H1 (cell line): ENCODE measurements at regions of chr11 and their contacts with region 1.

Region 1: GRCh38 chr11:70755410-70756161 is 357.3 kb downstream of the CTTN start:
- DNase-seq: peak; percentile 56 to 91
- H3K4me3 ChIP-seq: no peak overlapping the region
- H3K27ac ChIP-seq: no peak overlapping the region
- H3K4me1 ChIP-seq: peaks cover 0 to 2% (median 0%) of the 10 kb centered on the region in 4 experiments; a peak in 2 of 7 replicates
- H3K27me3 ChIP-seq: no peaks in the 10 kb centered on the region
- CTCF ChIP-seq: peak; percentile 95 to 99 (median 96)
- EP300 ChIP-seq: 0 out of 3 replicates have a peak, but pooled peaks of 1 of the 2 experiments have one; percentile 36
- POLR2A ChIP-seq: no peak
- RAD21 ChIP-seq: peak; percentile 95 to 96

Region 2: GRCh38 chr11:70517986-70518907 is 237.3 kb before region 1 on chr11:
- CTCF ChIA-PET with region 1: interaction called, 10 read pairs
- POLR2A ChIA-PET with region 1: no interaction called
- DNase-seq: no peak
- H3K4me3 ChIP-seq: no peak overlapping the region
- H3K27ac ChIP-seq: no peak overlapping the region
- H3K4me1 ChIP-seq: peaks cover 0 to 14% (median 8%) of the 10 kb centered on the region in 4 experiments; a peak in 6 of 7 replicates
- H3K27me3 ChIP-seq: no peaks in the 10 kb centered on the region; a peak in 1 of 7 replicates
- CTCF ChIP-seq: peak in 2 of 3 experiments; percentile 11 to 14; a peak in 2 of 4 replicates
- EP300 ChIP-seq: no peak
- POLR2A ChIP-seq: no peak
- RAD21 ChIP-seq: peak in 1 of 2 experiments; percentile 3; a peak in 1 of 4 replicates

Region 3: GRCh38 chr11:70544809-70545537 is 210.6 kb before region 1 on chr11:
- CTCF ChIA-PET with region 1: interaction called, 11 read pairs
- POLR2A ChIA-PET with region 1: no interaction called
- DNase-seq: peak in 1 of 2 experiments; percentile 57
- H3K4me3 ChIP-seq: no peak overlapping the region
- H3K27ac ChIP-seq: no peak overlapping the region
- H3K4me1 ChIP-seq: peaks cover 0 to 21% (median 16%) of the 10 kb centered on the region in 4 experiments; a peak in 6 of 7 replicates
- H3K27me3 ChIP-seq: no peaks in the 10 kb centered on the region
- CTCF ChIP-seq: no peak
- EP300 ChIP-seq: no peak
- POLR2A ChIP-seq: no peak
- RAD21 ChIP-seq: no peak

Region 4: GRCh38 chr11:70705930-70706329 is 49.7 kb before region 1 on chr11:
- CTCF ChIA-PET with region 1: interaction called, 11 read pairs
- POLR2A ChIA-PET with region 1: no interaction called
- DNase-seq: no peak
- H3K4me3 ChIP-seq: no peak overlapping the region
- H3K27ac ChIP-seq: no peak overlapping the region
- H3K4me1 ChIP-seq: peaks cover 0 to 9% (median 5%) of the 10 kb centered on the region in 4 experiments; a peak in 4 of 7 replicates
- H3K27me3 ChIP-seq: no peaks in the 10 kb centered on the region
- CTCF ChIP-seq: no peak
- EP300 ChIP-seq: no peak
- POLR2A ChIP-seq: no peak
- RAD21 ChIP-seq: no peak

Region 5: DNA sequence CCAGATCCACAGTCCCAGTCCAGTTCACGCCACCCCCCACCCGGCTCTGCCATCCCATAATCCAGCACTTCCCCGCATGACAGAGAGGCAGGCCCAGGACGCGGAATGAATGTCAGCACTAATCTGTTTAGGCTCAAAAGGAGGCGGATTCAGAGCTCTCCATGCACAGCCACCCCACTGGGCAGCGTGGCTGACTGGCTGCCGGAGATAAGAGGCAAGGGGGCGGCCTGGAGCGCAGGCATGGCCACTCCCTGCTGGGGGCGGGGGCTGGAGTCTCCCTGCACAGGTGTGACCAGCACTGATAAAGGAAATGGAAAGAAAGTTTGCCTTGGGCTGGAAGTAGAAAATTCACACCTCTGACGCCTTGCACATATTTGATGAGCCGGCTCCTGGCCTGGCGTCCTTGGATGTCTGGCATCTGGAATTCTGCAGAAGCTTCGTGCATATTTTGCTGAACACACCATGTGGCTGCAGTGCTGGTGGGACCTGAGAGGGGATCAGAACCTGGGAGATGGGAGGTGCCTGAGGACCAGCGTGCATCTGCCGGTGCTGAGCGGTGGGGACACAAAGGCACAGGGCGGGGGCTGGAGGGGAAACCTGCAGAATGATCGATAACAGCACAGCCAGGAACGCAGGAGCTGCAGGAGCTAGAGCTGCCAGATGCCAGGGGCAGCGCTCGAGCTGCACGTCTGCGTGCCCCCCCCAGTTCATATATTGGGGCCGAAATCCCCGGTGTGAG is 12.9 kb before region 1 on chr11:
- CTCF ChIA-PET with region 1: interaction called, 19 read pairs
- POLR2A ChIA-PET with region 1: interaction called, 3 read pairs
- DNase-seq: peak; percentile 51 to 82
- H3K4me3 ChIP-seq: peak overlapping the region in 1 of 4 experiments; percentile 6; a peak in 1 of 8 replicates
- H3K27ac ChIP-seq: no peak overlapping the region
- H3K4me1 ChIP-seq: peaks cover 10 to 27% (median 18%) of the 10 kb centered on the region in 4 experiments
- H3K27me3 ChIP-seq: no peaks in the 10 kb centered on the region
- CTCF ChIP-seq: no peak
- EP300 ChIP-seq: no peak
- POLR2A ChIP-seq: no peak
- RAD21 ChIP-seq: no peak; a peak in 1 of 4 replicates

Region 6: GRCh38 chr11:70818351-70818750 is 62.8 kb after region 1 on chr11:
- CTCF ChIA-PET with region 1: no interaction called
- POLR2A ChIA-PET with region 1: no interaction called
- DNase-seq: no peak
- H3K4me3 ChIP-seq: no peak overlapping the region
- H3K27ac ChIP-seq: no peak overlapping the region
- H3K4me1 ChIP-seq: peaks cover 0 to 6% (median 0%) of the 10 kb centered on the region in 4 experiments; a peak in 2 of 7 replicates
- H3K27me3 ChIP-seq: no peaks in the 10 kb centered on the region
- CTCF ChIP-seq: no peak
- EP300 ChIP-seq: no peak
- POLR2A ChIP-seq: no peak
- RAD21 ChIP-seq: no peak

Region 7: DNA sequence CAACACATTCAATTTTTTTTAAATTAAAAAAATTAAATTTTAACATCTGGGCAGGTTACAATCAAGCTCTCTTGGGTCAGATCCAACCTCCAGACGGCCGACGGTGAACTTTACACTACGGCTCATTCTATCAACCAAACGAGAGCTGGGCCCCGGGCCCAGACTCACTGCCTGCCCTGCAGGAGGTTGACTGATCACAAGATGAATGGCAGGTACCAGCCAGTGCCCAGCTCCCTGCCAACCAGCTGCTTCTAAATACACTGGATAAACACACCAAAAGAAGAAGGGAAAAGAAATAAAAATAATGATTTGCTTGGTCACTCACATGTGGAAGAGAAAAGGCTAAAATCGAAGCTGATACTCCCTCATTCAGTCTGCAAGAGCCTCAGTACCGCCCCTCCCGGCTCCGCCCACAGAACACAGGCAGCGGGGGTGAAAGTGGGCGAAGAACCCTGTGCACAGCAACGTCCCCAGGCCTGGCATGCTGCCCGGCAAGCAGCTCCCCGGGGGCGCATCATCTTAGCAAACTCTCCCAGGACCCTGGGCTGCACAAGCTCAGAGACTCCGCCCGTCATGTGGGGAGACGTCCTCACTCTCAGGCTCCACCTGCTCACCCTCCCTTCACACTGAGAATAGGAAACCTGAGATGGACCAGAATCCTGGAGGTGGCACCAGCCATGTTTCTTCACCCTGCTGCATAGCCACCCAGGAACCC is 193.4 kb after region 1 on chr11:
- CTCF ChIA-PET with region 1: no interaction called
- POLR2A ChIA-PET with region 1: no interaction called
- DNase-seq: no peak
- H3K4me3 ChIP-seq: no peak overlapping the region
- H3K27ac ChIP-seq: no peak overlapping the region
- H3K4me1 ChIP-seq: peaks cover 0 to 6% (median 0%) of the 10 kb centered on the region in 4 experiments; a peak in 1 of 7 replicates
- H3K27me3 ChIP-seq: no peaks in the 10 kb centered on the region
- CTCF ChIP-seq: no peak
- EP300 ChIP-seq: no peak
- POLR2A ChIP-seq: no peak
- RAD21 ChIP-seq: no peak

Region 8: DNA sequence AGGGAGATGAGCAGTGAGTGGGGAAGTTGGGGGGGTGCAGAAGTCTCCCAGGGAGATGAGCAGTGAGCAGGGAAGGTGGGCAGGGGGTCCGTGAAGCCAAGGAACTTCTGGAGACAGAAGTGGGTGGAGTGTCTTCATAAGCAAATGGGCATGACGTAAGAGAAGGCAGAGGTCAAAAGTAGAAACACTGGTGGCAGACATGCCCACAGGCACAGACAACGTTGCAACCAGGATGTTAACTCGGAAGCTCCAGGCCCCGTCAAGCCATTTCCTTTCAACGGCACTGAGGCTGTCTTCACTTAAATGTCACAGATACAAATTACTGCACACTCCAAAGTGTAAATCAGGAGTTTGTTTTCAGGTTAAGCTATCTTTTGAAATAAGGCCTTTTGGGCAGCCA is 310.7 kb after region 1 on chr11:
- CTCF ChIA-PET with region 1: no interaction called
- POLR2A ChIA-PET with region 1: no interaction called
- DNase-seq: no peak
- H3K4me3 ChIP-seq: no peak overlapping the region
- H3K27ac ChIP-seq: no peak overlapping the region
- H3K4me1 ChIP-seq: no peaks in the 10 kb centered on the region; a peak in 2 of 7 replicates
- H3K27me3 ChIP-seq: no peaks in the 10 kb centered on the region
- CTCF ChIP-seq: no peak
- EP300 ChIP-seq: no peak
- POLR2A ChIP-seq: no peak
- RAD21 ChIP-seq: no peak